ENCODE measurements at regions of chr20 and their contacts with region 1.

Region 1: GRCh38 chr20:44683263-44684046 is 31.7 kb upstream of the CCN5 start:
- DNase-seq: no peak
- ATAC-seq: peak; percentile 37
- H3K4me3 Mint-ChIP-seq: no peak overlapping the region
- H3K27ac Mint-ChIP-seq: no peak overlapping the region
- H3K4me1 Mint-ChIP-seq: peaks cover 2% of the 10 kb centered on the region
- H3K27me3 Mint-ChIP-seq: peaks cover 6% of the 10 kb centered on the region
- CTCF ChIP-seq: no peak

Region 2: GRCh38 chr20:44495802-44496481 is 187.5 kb before region 1 on chr20:
- CTCF ChIA-PET with region 1: no interaction called
- POLR2A ChIA-PET with region 1: no interaction called
- intact Hi-C with region 1: no loop called
- DNase-seq: no peak
- ATAC-seq: peak; percentile 75
- H3K4me3 Mint-ChIP-seq: no peak overlapping the region
- H3K27ac Mint-ChIP-seq: peak overlapping the region; percentile 64
- H3K4me1 Mint-ChIP-seq: peaks cover 36% of the 10 kb centered on the region
- H3K27me3 Mint-ChIP-seq: no peaks in the 10 kb centered on the region
- CTCF ChIP-seq: no peak

Region 3: GRCh38 chr20:44702776-44703175 is 19.3 kb after region 1 on chr20:
- CTCF ChIA-PET with region 1: interaction called, 13 read pairs
- POLR2A ChIA-PET with region 1: no interaction called
- intact Hi-C with region 1: no loop called
- DNase-seq: no peak
- ATAC-seq: peak; percentile 31
- H3K4me3 Mint-ChIP-seq: no peak overlapping the region
- H3K27ac Mint-ChIP-seq: no peak overlapping the region
- H3K4me1 Mint-ChIP-seq: peaks cover 13% of the 10 kb centered on the region
- H3K27me3 Mint-ChIP-seq: peaks cover 3% of the 10 kb centered on the region
- CTCF ChIP-seq: no peak

Measured in activated B cell treated with CpG ODN at 0.5 μM for 24 hours (primary cell).